ENCODE measurements at regions of chr1 and their contacts with region 1.

Region 1: GRCh38 chr1:208868554-208868953 is 624.4 kb upstream of the PLXNA2 start:
- DNase-seq: no peak
- H3K4me3 Mint-ChIP-seq: no peak overlapping the region
- H3K27ac Mint-ChIP-seq: no peak overlapping the region
- H3K4me1 Mint-ChIP-seq: peaks cover 9% of the 10 kb centered on the region
- H3K27me3 Mint-ChIP-seq: no peaks in the 10 kb centered on the region
- CTCF ChIP-seq: no peak

Region 2: DNA sequence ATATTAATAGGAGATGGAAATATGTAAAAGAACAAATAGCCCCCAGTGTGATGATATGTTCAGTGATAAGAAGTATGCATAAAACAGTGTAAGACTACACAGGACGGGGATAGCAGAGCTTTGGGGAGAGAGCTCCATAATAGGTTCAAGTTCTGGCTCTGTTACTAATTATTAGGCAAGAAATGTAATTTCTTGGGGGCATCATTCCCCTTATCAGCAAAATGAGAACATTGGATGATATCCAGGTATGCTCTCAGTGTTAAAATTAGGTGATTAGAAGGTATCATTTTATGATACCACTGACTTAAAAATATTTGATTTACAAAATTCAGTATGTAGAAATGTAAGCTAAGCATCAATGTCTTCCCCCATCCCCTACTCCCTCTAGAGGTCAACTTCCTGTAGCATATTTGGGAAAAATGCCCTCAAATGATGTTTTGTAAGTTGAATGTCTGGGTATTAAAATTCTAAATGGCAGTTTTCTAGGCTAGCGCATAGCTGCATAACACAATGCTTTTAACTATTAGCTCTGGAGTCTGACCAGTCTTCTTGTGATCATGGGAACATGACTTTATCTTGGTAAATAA is 129.3 kb after region 1 on chr1:
- CTCF ChIA-PET with region 1: no interaction called
- POLR2A ChIA-PET with region 1: no interaction called
- intact Hi-C with region 1: loop called (anchors 5 kb)
- DNase-seq: peak; percentile 70
- H3K4me3 Mint-ChIP-seq: no peak overlapping the region
- H3K27ac Mint-ChIP-seq: no peak overlapping the region
- H3K4me1 Mint-ChIP-seq: no peaks in the 10 kb centered on the region
- H3K27me3 Mint-ChIP-seq: no peaks in the 10 kb centered on the region
- CTCF ChIP-seq: peak; percentile 82

Measured in MCF 10A (cell line).